GM12878 (cell line): ENCODE measurements at regions of chr15 and their contacts with region 1.

Region 1: GRCh38 chr15:66386204-66387123 is at the start of gene MAP2K1:
- DNase-seq: peak; percentile 90
- ATAC-seq: peak; percentile 84
- H3K4me3 ChIP-seq: peak within 1 kb of the TSS; percentile 100
- H3K27ac ChIP-seq: peak within 1 kb of the TSS; percentile 73
- H3K4me1 ChIP-seq: peaks cover 17% of the 10 kb centered on the region; the same call in 1 of the 2 replicates
- H3K27me3 ChIP-seq: no peaks in the 10 kb centered on the region
- CTCF ChIP-seq: peak; percentile 64 to 84 (median 79)
- EP300 ChIP-seq: 0 out of 4 replicates have a peak, but pooled peaks of 1 of the 2 experiments have one; percentile 13
- POLR2A ChIP-seq: peak; percentile 93
- RAD21 ChIP-seq: peak; percentile 47; the same call in 1 of the 2 replicates
- polyA plus RNA-seq, gene MAP2K1: 11.2 to 17.7 TPM

Region 2: GRCh38 chr15:66240240-66240794 is 146.1 kb before region 1 on chr15:
- CTCF ChIA-PET with region 1: no interaction called
- POLR2A ChIA-PET with region 1: no interaction called
- RAD21 ChIA-PET with region 1: no interaction called
- SMC1A ChIA-PET with region 1: no interaction called
- in situ Hi-C with region 1: no loop called
- intact Hi-C with region 1: no loop called
- DNase-seq: no peak
- ATAC-seq: no peak
- H3K4me3 ChIP-seq: no peak overlapping the region
- H3K27ac ChIP-seq: no peak overlapping the region
- H3K4me1 ChIP-seq: no peaks in the 10 kb centered on the region
- H3K27me3 ChIP-seq: peaks cover 3% of the 10 kb centered on the region in 2 experiments; a peak in 3 of 4 replicates
- CTCF ChIP-seq: no peak
- EP300 ChIP-seq: no peak
- POLR2A ChIP-seq: no peak
- RAD21 ChIP-seq: no peak

Region 3: DNA sequence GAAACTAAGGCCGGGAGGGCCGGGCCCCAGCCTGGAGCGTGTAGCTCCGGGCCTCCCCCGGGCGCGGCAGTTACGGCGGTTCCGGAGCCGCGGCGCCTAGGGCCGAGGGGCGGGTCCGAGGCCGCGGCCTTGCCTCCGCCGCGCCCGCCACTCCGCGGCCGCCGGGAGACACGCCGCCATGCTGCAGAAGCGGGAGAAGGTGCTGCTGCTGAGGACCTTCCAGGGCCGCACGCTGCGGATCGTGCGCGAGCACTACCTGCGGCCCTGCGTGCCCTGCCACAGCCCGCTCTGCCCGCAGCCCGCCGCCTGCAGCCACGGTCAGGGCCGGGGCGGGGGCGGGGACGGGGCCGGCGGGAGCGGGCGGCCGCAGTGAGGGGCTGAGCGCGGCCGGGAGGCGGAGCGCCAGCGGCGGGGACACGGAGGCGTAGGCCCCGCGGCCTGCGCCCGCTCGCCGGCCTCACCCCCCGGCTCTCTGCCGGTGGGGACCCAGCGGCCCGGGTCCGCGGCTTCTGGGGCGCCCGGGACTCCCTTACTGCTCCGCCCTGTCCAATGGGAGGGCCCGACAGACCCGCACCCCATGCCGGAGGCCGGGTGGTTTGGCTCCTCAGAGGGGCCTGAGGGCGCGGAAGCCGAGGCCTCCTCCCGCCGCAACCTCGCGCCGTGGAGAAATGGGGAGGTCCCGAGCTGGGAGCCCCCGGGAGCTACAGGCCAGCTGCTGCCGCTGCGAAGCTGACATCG is 92.9 kb before region 1 on chr15 and contains the start of gene DIS3L:
- CTCF ChIA-PET with region 1: interaction called, 9 read pairs
- POLR2A ChIA-PET with region 1: interaction called, 3 read pairs
- RAD21 ChIA-PET with region 1: interaction called, 10 read pairs
- SMC1A ChIA-PET with region 1: interaction called, 6 read pairs
- in situ Hi-C with region 1: no loop called
- intact Hi-C with region 1: no loop called
- DNase-seq: peak; percentile 8
- ATAC-seq: peak; percentile 82
- H3K4me3 ChIP-seq: peak within 1 kb of the TSS; percentile 71
- H3K27ac ChIP-seq: peak within 1 kb of the TSS; percentile 76
- H3K4me1 ChIP-seq: peaks cover 3% of the 10 kb centered on the region; the same call in 1 of the 2 replicates
- H3K27me3 ChIP-seq: no peaks in the 10 kb centered on the region
- CTCF ChIP-seq: no peak
- EP300 ChIP-seq: no peak
- POLR2A ChIP-seq: peak; percentile 86
- RAD21 ChIP-seq: no peak
- polyA plus RNA-seq, gene DIS3L: 7.6 to 12.8 TPM

Region 4: GRCh38 chr15:66369773-66370651 is 16.5 kb before region 1 on chr15:
- CTCF ChIA-PET with region 1: interaction called, 19 read pairs
- POLR2A ChIA-PET with region 1: interaction called, 10 read pairs
- RAD21 ChIA-PET with region 1: interaction called, 9 read pairs
- SMC1A ChIA-PET with region 1: interaction called, 6 read pairs
- in situ Hi-C with region 1: no loop called
- intact Hi-C with region 1: no loop called
- DNase-seq: peak; percentile 68
- ATAC-seq: peak; percentile 87
- H3K4me3 ChIP-seq: peak overlapping the region; percentile 20; the same call in 1 of the 2 replicates
- H3K27ac ChIP-seq: peak overlapping the region; percentile 96
- H3K4me1 ChIP-seq: peaks cover 6% of the 10 kb centered on the region
- H3K27me3 ChIP-seq: no peaks in the 10 kb centered on the region
- CTCF ChIP-seq: no peak
- EP300 ChIP-seq: no peak
- POLR2A ChIP-seq: peak; percentile 53; the same call in 1 of the 2 replicates
- RAD21 ChIP-seq: 0 out of 2 replicates have a peak, but pooled peaks have one; percentile 0

Region 5: GRCh38 chr15:66424963-66425612 is 38.6 kb after region 1 on chr15:
- CTCF ChIA-PET with region 1: interaction called, 5 read pairs
- POLR2A ChIA-PET with region 1: interaction called, 8 read pairs
- RAD21 ChIA-PET with region 1: interaction called, 15 read pairs
- SMC1A ChIA-PET with region 1: interaction called, 39 read pairs
- in situ Hi-C with region 1: no loop called
- intact Hi-C with region 1: loop called (anchors 2 kb)
- DNase-seq: no peak
- ATAC-seq: peak; percentile 58
- H3K4me3 ChIP-seq: peak overlapping the region; percentile 3; the same call in 1 of the 2 replicates
- H3K27ac ChIP-seq: peak overlapping the region; percentile 70
- H3K4me1 ChIP-seq: peaks cover 51% of the 10 kb centered on the region
- H3K27me3 ChIP-seq: no peaks in the 10 kb centered on the region
- CTCF ChIP-seq: no peak
- EP300 ChIP-seq: no peak; a peak in 1 of 4 replicates
- POLR2A ChIP-seq: no peak
- RAD21 ChIP-seq: no peak

Region 6: DNA sequence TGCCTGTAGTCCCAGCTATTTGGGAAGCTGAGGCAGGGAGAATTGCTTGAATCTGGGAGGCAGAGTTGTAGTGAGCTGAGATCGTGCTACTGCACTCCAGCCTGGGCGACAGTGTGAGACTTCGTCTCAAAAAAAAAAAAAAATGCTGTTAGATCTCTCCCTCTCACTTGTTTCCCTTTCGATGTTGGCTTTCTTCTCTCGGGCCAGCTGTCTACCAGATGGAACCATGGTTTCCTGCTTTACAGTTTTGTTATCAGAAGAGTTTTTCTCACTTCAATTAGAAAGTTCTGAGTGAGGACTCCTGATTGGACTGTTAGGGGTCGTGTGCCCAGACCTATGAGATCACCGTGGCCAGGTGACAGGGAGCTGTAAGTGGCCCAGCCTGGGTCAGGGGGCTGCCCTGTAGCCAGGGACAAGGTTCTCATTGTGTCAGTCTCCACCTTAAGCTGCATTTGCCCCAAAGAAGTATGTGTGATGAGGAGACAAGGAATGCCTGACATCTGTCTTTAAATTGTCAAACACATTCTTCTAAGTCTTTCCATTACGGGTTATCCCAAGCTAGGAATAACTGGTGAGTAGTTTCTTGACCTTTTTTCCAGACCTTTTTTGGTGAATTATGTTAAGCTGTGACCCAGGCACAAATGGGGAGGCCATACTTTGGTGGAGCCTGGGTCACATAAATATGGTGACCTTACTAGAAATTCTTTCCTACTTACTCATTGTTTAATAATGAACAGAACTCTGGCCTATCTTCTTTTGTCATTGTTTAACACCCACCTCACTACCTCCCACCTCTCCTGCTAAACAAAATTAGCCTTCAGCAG is 85.9 kb after region 1 on chr15:
- CTCF ChIA-PET with region 1: interaction called, 6 read pairs
- POLR2A ChIA-PET with region 1: interaction called, 5 read pairs
- RAD21 ChIA-PET with region 1: interaction called, 35 read pairs
- SMC1A ChIA-PET with region 1: interaction called, 20 read pairs
- in situ Hi-C with region 1: no loop called
- intact Hi-C with region 1: loop called (anchors 1 kb)
- DNase-seq: peak; percentile 78
- ATAC-seq: peak; percentile 94
- H3K4me3 ChIP-seq: no peak overlapping the region
- H3K27ac ChIP-seq: peak overlapping the region; percentile 69
- H3K4me1 ChIP-seq: peaks cover 35% of the 10 kb centered on the region
- H3K27me3 ChIP-seq: no peaks in the 10 kb centered on the region
- CTCF ChIP-seq: no peak
- EP300 ChIP-seq: no peak
- POLR2A ChIP-seq: no peak
- RAD21 ChIP-seq: no peak

Region 7: DNA sequence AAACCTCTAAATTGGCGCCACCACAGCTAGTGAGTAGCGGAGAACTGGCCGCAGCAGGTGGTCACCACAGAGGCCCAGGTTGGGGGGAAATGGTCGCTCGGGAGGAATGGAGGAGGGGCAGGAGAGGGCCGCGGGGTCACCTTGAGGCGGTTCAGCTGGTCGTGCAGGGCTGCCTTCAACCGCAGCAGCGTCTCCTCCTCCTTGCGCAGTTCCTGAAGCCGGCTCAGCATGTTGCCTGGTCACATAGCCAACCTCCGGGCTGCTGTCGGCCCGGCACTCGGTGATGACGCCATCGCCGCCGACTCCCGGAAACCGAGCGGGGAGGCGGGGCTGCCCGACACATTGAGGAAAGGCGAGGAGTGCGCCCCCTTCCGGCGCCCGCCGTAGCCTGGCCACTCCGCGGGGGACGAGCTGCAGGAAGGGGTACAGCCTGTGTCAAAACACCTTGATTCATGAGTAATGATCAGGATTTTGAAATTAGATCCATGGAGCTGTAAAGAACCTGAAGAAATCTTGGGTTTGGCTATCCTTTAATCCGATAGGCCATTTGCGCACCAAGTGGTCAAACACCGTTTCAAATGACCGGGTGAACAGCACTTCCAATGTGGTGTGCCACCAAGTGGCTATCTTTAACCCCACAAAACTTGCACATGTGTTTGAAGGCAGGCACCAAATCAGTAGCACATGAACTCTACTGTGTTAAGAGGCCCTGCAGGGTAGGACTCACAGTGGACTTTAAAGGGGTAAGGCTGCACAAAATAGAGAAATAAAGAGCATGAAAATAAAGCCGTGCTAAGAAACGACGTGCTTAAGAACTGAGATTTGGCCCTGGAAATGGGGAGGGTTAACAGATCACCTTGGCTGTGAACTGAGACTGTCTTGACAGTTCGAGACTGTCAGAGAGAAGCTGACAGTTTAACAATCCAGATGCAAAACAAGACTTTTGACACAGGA is 111.3 kb after region 1 on chr15 and contains the start of gene SNAPC5:
- CTCF ChIA-PET with region 1: interaction called, 90 read pairs
- POLR2A ChIA-PET with region 1: interaction called, 26 read pairs
- RAD21 ChIA-PET with region 1: interaction called, 65 read pairs
- SMC1A ChIA-PET with region 1: interaction called, 51 read pairs
- in situ Hi-C with region 1: no loop called
- intact Hi-C with region 1: loop called (anchors 1 kb)
- DNase-seq: peak; percentile 72
- ATAC-seq: peak; percentile 90
- H3K4me3 ChIP-seq: peak within 1 kb of the TSS; percentile 87
- H3K27ac ChIP-seq: peak within 1 kb of the TSS; percentile 80
- H3K4me1 ChIP-seq: peaks cover 4% of the 10 kb centered on the region; the same call in 1 of the 2 replicates
- H3K27me3 ChIP-seq: no peaks in the 10 kb centered on the region
- CTCF ChIP-seq: peak; percentile 85 to 98 (median 94)
- EP300 ChIP-seq: no peak
- POLR2A ChIP-seq: peak; percentile 93
- RAD21 ChIP-seq: no peak; the same call in 1 of the 2 replicates
- polyA plus RNA-seq, gene SNAPC5: 53.0 to 53.5 TPM

Region 8: GRCh38 chr15:66673410-66674322 is 287.2 kb after region 1 on chr15:
- CTCF ChIA-PET with region 1: no interaction called
- POLR2A ChIA-PET with region 1: no interaction called
- RAD21 ChIA-PET with region 1: no interaction called
- SMC1A ChIA-PET with region 1: no interaction called
- in situ Hi-C with region 1: no loop called
- intact Hi-C with region 1: no loop called
- DNase-seq: no peak
- ATAC-seq: peak; percentile 40; the same call in 1 of the 3 replicates
- H3K4me3 ChIP-seq: no peak overlapping the region
- H3K27ac ChIP-seq: no peak overlapping the region
- H3K4me1 ChIP-seq: no peaks in the 10 kb centered on the region
- H3K27me3 ChIP-seq: no peaks in the 10 kb centered on the region
- CTCF ChIP-seq: no peak
- EP300 ChIP-seq: no peak
- POLR2A ChIP-seq: no peak
- RAD21 ChIP-seq: no peak

Region 9: DNA sequence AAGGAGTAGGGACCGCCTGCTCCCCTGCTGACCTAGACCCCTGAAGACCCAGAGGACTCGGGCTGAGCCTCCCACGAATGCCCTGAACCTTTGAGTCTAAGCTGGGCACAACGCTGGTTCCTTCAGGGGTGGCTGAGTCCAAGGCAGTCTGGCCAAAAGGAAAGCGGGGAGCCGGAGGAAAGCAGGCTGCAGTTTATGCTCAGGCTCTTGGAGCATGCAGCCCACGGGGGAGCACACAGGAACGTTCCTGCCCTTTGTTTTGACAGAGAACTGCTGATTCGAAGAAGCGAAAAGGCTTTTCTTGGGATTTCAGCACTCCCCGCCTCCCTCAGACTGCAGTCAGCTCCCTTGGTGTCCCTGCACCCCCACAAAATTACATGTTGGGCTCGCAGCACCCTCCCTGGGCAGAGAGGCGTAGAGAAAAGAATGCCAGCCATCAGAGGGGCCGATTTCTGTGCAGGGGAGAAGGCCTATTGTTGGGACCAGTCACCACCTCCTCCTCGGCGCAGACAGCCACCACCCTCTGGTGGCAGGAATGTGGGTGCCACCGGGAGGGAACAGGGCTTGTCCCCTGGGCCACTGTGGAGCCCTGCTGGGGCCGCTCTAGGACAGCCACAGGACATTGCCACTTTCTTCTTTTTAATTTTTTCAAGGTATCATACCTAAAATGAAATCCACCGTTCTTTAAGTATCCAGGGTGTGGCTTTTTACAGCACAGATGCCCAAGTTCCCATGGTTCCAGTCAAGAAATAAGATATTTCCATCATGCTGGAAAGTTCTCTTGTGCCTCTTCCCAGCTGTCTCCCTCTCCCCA is 387.7 kb after region 1 on chr15:
- CTCF ChIA-PET with region 1: no interaction called
- POLR2A ChIA-PET with region 1: no interaction called
- RAD21 ChIA-PET with region 1: no interaction called
- SMC1A ChIA-PET with region 1: no interaction called
- in situ Hi-C with region 1: no loop called
- intact Hi-C with region 1: no loop called
- DNase-seq: no peak
- ATAC-seq: peak; percentile 98
- H3K4me3 ChIP-seq: no peak overlapping the region
- H3K27ac ChIP-seq: no peak overlapping the region
- H3K4me1 ChIP-seq: no peaks in the 10 kb centered on the region
- H3K27me3 ChIP-seq: no peaks in the 10 kb centered on the region
- CTCF ChIP-seq: peak; percentile 66 to 87 (median 82)
- EP300 ChIP-seq: no peak
- POLR2A ChIP-seq: no peak
- RAD21 ChIP-seq: peak; percentile 75